Psoas muscle (tissue), 8 donors: ENCODE measurements at regions of chr10 and their contacts with region 1.

Region 1: GRCh38 chr10:123559066-123559822 is 106.9 kb upstream of the GPR26 start:
- DNase-seq: peak; percentile 65 to 73
- ATAC-seq: peak; percentile 74 to 89 (median 84)
- H3K4me3 ChIP-seq: no peak overlapping the region
- H3K27ac ChIP-seq: no peak overlapping the region
- H3K4me1 ChIP-seq: no peaks in the 10 kb centered on the region
- H3K27me3 ChIP-seq: no peaks in the 10 kb centered on the region
- CTCF ChIP-seq: peak; percentile 98

Region 2: GRCh38 chr10:122648599-122649428 is 910.4 kb before region 1 on chr10:
- intact Hi-C with region 1: loop called (anchors 5 to 10 kb)
- DNase-seq: peak; percentile 29 to 61
- ATAC-seq: peak in 1 of 4 donors; percentile 40
- H3K4me3 ChIP-seq: no peak overlapping the region
- H3K27ac ChIP-seq: no peak overlapping the region
- H3K4me1 ChIP-seq: no peaks in the 10 kb centered on the region
- H3K27me3 ChIP-seq: peaks cover 0 to 11% (median 0%) of the 10 kb centered on the region in 3 donors
- CTCF ChIP-seq: peak; percentile 47

Region 3: GRCh38 chr10:122655524-122656307 is 903.5 kb before region 1 on chr10:
- intact Hi-C with region 1: loop called in 1 of 2 experiments (anchors 10 kb)
- DNase-seq: no peak
- ATAC-seq: no peak
- H3K4me3 ChIP-seq: no peak overlapping the region
- H3K27ac ChIP-seq: no peak overlapping the region
- H3K4me1 ChIP-seq: no peaks in the 10 kb centered on the region
- H3K27me3 ChIP-seq: peaks cover 0 to 16% (median 0%) of the 10 kb centered on the region in 3 donors
- CTCF ChIP-seq: no peak

Region 4: DNA sequence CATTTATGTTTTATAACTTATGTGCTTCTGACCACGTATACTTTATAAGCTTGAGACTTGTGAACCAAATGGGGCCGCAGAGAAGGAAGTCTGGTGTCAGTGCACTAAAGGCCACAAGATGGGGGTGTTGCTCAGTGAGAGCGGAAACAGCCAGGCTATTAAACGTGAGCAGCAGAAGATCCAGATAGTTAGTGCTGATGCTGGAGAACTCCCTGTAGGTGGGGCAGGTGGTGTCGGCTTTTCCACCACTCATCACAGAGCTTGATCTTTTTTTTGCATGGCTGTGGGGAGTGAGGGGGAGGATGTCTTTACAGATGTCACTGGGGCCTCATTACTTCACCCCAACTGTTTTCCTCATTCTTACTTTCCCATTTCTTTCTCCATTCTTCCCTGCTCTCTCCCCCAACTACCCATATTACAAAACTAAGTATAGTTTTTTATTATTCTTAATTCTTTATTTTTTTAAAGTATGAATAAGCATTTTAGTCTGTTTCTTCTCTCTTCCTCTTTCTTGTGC is 515.8 kb before region 1 on chr10:
- intact Hi-C with region 1: loop called in 1 of 2 experiments (anchors 5 kb)
- DNase-seq: no peak
- ATAC-seq: no peak
- H3K4me3 ChIP-seq: no peak overlapping the region
- H3K27ac ChIP-seq: no peak overlapping the region
- H3K4me1 ChIP-seq: no peaks in the 10 kb centered on the region
- H3K27me3 ChIP-seq: no peaks in the 10 kb centered on the region
- CTCF ChIP-seq: peak; percentile 27

Region 5: DNA sequence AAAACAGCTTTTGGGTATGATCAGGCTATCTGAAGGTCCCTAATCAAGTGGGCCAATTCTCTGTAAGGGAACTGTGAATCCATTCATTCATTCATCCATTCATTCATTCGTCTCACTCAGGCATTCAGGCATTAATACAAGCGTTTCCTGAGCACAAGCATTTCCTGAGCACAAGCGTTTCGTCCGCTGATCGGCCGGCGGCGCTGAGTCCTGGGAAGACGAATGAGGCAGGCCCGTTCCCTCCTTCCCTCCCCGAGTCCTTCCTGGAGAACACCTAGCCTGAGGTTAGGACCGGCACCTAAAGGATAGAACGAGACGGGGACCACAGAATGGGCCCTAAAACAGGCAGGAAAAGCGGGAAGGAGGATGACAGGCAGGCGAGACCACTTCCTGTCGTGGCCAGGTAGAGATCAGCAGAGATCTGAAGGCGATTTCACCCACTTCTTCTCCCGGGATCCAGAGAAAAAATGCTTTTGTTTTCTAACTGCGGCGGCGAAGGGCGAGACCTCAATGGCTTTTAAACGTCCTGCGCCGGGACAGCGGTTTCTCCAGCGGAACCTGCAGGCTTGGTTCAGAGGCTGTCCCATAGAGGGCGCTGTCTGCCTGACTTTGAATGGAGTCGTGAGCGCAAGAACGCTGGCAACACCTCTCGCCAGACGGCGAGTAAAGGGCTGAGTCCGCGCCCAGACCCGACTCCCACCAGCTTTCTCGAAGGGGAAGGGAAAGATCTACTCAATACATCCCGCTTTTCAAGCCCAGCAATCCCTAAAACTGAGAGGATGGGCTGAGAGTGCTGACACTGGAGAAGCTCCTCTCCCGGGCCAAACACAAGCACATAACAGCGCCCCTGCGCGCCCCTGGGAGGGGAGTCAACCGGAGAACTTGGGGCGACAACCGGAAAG is 426.4 kb before region 1 on chr10:
- intact Hi-C with region 1: loop called (anchors 1 to 5 kb)
- DNase-seq: peak; percentile 80 to 90
- ATAC-seq: peak; percentile 83 to 89 (median 88)
- H3K4me3 ChIP-seq: peak overlapping the region; percentile 34
- H3K27ac ChIP-seq: no peak overlapping the region
- H3K4me1 ChIP-seq: peaks cover 29% of the 10 kb centered on the region
- H3K27me3 ChIP-seq: peaks cover 0 to 97% (median 53%) of the 10 kb centered on the region in 3 donors
- CTCF ChIP-seq: peak; percentile 89